Prostate gland (tissue), 2 donors: ENCODE measurements at regions of chr13 and their contacts with region 1.

Region 1: GRCh38 chr13:41652727-41653361 is 195.5 kb downstream of the RGCC start:
- DNase-seq: peak; percentile 30
- H3K4me3 ChIP-seq: no peak overlapping the region
- H3K27ac ChIP-seq: peak overlapping the region in 1 of 2 donors; percentile 46
- H3K4me1 ChIP-seq: no peaks in the 10 kb centered on the region
- H3K27me3 ChIP-seq: no peaks in the 10 kb centered on the region
- CTCF ChIP-seq: peak in 3 of 4 experiments; percentile 49 to 89 (median 85)
- POLR2A ChIP-seq: no peak

Region 2: GRCh38 chr13:41411522-41411921 is 241.3 kb before region 1 on chr13:
- intact Hi-C with region 1: loop called (anchors 5 kb)
- DNase-seq: peak; percentile 13
- H3K4me3 ChIP-seq: no peak overlapping the region
- H3K27ac ChIP-seq: no peak overlapping the region
- H3K4me1 ChIP-seq: no peaks in the 10 kb centered on the region
- H3K27me3 ChIP-seq: no peaks in the 10 kb centered on the region
- CTCF ChIP-seq: peak in 2 of 4 experiments; percentile 27 to 45
- POLR2A ChIP-seq: no peak